ENCODE measurements at regions of chr10 and their contacts with region 1.

Region 1: GRCh38 chr10:48608279-48608681 is 3.4 kb upstream of the ARHGAP22 start:
- DNase-seq: peak; percentile 73 to 77 (median 75)
- ATAC-seq: peak; percentile 96
- H3K4me3 ChIP-seq: no peak overlapping the region
- H3K27ac ChIP-seq: no peak overlapping the region
- H3K4me1 ChIP-seq: peaks cover 0 to 9% of the 10 kb centered on the region in 2 experiments; a peak in 2 of 5 replicates
- H3K27me3 ChIP-seq: peaks cover 22 to 29% of the 10 kb centered on the region in 2 experiments
- CTCF ChIP-seq: peak; percentile 77 to 92 (median 88)
- EP300 ChIP-seq: no peak
- POLR2A ChIP-seq: no peak
- RAD21 ChIP-seq: peak in 1 of 2 experiments; percentile 53; a peak in 2 of 4 replicates

Region 2: DNA sequence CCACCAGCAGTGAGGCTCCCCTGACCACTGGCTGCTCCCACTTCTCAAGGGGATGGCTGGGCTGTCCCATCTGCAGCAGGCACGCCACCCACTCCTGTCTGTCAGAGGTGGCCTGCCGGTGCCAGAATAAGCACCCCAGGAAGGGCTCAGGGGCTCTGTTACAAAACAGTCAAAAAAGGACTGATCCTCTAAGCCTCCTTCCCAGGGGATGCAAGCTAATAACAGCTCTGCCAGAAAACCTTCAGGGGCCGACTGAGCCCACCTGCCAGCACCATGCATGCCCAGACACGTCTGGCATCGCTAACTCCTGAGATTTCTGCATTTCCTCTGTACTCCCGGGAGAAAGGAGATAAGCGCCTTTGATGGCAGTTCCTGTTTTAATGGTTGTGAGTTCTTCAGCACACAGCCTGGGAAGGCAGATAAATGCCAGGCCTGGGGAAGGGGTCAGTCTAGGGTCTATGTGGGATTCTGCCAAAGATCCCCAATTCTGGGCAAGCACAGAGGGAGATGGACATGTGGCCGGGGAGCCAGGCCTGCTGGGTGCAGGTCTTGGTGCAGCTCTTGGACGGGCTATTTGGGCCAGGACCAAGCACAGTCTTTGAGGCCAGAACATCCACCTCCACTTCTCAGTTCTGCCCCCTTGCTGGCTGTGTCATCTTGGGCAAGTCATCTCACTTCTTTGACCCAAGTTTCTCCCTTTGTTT is 131.8 kb before region 1 on chr10:
- CTCF ChIA-PET with region 1: no interaction called
- POLR2A ChIA-PET with region 1: no interaction called
- in situ Hi-C with region 1: no loop called
- intact Hi-C with region 1: no loop called
- DNase-seq: no peak
- ATAC-seq: peak; percentile 5; the same call in 1 of the 3 replicates
- H3K4me3 ChIP-seq: no peak overlapping the region
- H3K27ac ChIP-seq: peak overlapping the region; percentile 40
- H3K4me1 ChIP-seq: peaks cover 73 to 85% of the 10 kb centered on the region in 2 experiments
- H3K27me3 ChIP-seq: no peaks in the 10 kb centered on the region
- CTCF ChIP-seq: no peak
- EP300 ChIP-seq: peak; percentile 70; the same call in 1 of the 2 replicates
- POLR2A ChIP-seq: no peak
- RAD21 ChIP-seq: no peak

Region 3: GRCh38 chr10:48551861-48552591 is 56.3 kb before region 1 on chr10:
- CTCF ChIA-PET with region 1: no interaction called
- POLR2A ChIA-PET with region 1: no interaction called
- in situ Hi-C with region 1: no loop called
- intact Hi-C with region 1: loop called (anchors 5 kb)
- DNase-seq: peak; percentile 44 to 73 (median 64)
- ATAC-seq: peak; percentile 81
- H3K4me3 ChIP-seq: no peak overlapping the region
- H3K27ac ChIP-seq: no peak overlapping the region
- H3K4me1 ChIP-seq: no peaks in the 10 kb centered on the region
- H3K27me3 ChIP-seq: peaks cover 16 to 43% of the 10 kb centered on the region in 2 experiments; a peak in 4 of 5 replicates
- CTCF ChIP-seq: peak; percentile 74 to 86 (median 77)
- EP300 ChIP-seq: no peak
- POLR2A ChIP-seq: no peak
- RAD21 ChIP-seq: peak; percentile 64 to 74

Region 4: GRCh38 chr10:48890888-48891850 is 282.9 kb after region 1 on chr10:
- CTCF ChIA-PET with region 1: no interaction called
- POLR2A ChIA-PET with region 1: no interaction called
- in situ Hi-C with region 1: no loop called
- intact Hi-C with region 1: no loop called
- DNase-seq: no peak
- ATAC-seq: no peak
- H3K4me3 ChIP-seq: no peak overlapping the region
- H3K27ac ChIP-seq: no peak overlapping the region
- H3K4me1 ChIP-seq: no peaks in the 10 kb centered on the region
- H3K27me3 ChIP-seq: peaks cover 3 to 19% of the 10 kb centered on the region in 2 experiments; a peak in 4 of 5 replicates
- CTCF ChIP-seq: no peak
- EP300 ChIP-seq: no peak
- POLR2A ChIP-seq: no peak
- RAD21 ChIP-seq: no peak